K562 (cell line): ENCODE measurements at regions of chrX and their contacts with region 1.

Region 1: GRCh38 chrX:18377796-18378195 is 23.3 kb upstream of the SCML2 start:
- DNase-seq: peak; percentile 22 to 48 (median 27)
- ATAC-seq: peak; percentile 90
- H3K4me3 ChIP-seq: no peak overlapping the region
- H3K27ac ChIP-seq: no peak overlapping the region
- H3K4me1 ChIP-seq: no peaks in the 10 kb centered on the region
- H3K27me3 ChIP-seq: peaks cover 0 to 5% of the 10 kb centered on the region in 2 experiments; a peak in 2 of 5 replicates
- CTCF ChIP-seq: peak; percentile 63 to 71 (median 69)
- EP300 ChIP-seq: no peak
- POLR2A ChIP-seq: no peak
- RAD21 ChIP-seq: peak; percentile 49 to 71; a peak in 3 of 4 replicates

Region 2: DNA sequence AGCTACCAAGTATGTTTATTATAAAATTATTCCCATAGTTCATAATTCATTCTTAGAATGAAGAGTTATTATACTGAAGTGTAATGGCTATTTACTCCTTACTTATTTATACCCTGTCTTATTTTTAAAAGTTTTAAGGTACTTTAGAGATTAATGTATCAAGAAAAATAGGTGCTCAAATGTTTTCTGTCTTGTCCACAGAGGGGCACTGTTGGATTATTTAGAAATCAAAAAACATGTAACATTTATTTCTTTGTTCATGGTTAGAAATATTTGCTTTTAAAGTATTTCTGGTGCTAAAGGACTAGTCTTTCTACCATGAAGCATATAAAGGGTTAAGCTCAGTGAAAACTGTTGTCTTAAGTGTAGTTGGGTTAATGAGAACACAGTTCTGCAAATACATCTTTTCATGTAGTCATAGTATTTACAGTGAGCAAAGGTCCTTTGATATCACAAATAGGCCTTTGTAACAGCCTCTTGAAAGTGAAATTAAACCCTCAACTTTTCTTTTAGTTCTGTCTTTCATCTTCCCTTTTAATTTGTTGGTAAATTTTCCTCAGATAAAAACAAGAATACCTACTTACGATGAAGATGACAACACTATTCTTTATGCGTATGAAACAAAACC is 632.8 kb before region 1 on chrX:
- CTCF ChIA-PET with region 1: interaction called, 4 read pairs
- POLR2A ChIA-PET with region 1: no interaction called
- in situ Hi-C with region 1: no loop called
- intact Hi-C with region 1: loop called (anchors 5 kb)
- DNase-seq: no peak
- ATAC-seq: no peak
- H3K4me3 ChIP-seq: no peak overlapping the region
- H3K27ac ChIP-seq: no peak overlapping the region
- H3K4me1 ChIP-seq: no peaks in the 10 kb centered on the region
- H3K27me3 ChIP-seq: no peaks in the 10 kb centered on the region
- CTCF ChIP-seq: peak in 1 of 3 experiments; percentile 33; a peak in 1 of 6 replicates
- EP300 ChIP-seq: no peak
- POLR2A ChIP-seq: no peak
- RAD21 ChIP-seq: peak in 1 of 2 experiments; percentile 45; a peak in 3 of 4 replicates

Region 3: GRCh38 chrX:17792826-17793225 is 585.0 kb before region 1 on chrX:
- CTCF ChIA-PET with region 1: no interaction called
- POLR2A ChIA-PET with region 1: no interaction called
- in situ Hi-C with region 1: loop called (anchors 10 kb)
- intact Hi-C with region 1: no loop called
- DNase-seq: no peak
- ATAC-seq: no peak
- H3K4me3 ChIP-seq: no peak overlapping the region
- H3K27ac ChIP-seq: no peak overlapping the region
- H3K4me1 ChIP-seq: no peaks in the 10 kb centered on the region
- H3K27me3 ChIP-seq: peaks cover 0 to 6% of the 10 kb centered on the region in 2 experiments; a peak in 1 of 5 replicates
- CTCF ChIP-seq: no peak
- EP300 ChIP-seq: no peak
- POLR2A ChIP-seq: no peak
- RAD21 ChIP-seq: no peak

Region 4: DNA sequence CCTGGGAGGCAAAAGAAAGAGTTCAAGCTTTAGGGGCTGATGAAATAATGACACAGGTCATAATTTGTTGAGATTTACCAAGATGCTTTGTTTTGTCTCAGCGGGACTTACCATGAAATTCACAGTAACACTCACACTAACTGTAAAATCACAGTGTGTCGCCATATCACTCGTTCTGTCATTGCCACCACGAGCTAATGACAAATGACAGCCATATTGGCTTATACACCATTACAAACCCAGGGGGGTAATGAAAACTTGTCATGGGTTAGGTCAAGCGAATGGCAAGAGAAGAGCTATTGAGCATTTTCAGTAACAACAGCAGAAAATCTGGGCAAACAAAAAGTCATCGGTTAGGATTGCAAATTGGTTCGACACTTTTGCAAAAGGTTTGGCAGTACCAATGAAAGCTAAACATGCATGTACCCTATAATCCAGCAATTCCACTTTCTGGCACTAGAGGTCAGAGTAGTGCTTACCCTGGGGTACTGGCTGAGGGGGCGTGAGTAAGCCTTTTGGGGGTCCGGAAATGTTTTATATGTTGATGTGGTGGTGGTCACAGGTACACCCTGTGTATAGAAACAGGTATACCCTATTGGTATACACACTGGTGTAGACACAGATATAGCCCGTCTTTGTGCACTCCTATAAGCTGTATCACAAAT is 432.8 kb before region 1 on chrX:
- CTCF ChIA-PET with region 1: no interaction called
- POLR2A ChIA-PET with region 1: no interaction called
- in situ Hi-C with region 1: loop called (anchors 25 kb)
- intact Hi-C with region 1: loop called (anchors 5 kb)
- DNase-seq: peak; percentile 18 to 40 (median 24)
- ATAC-seq: peak; percentile 72
- H3K4me3 ChIP-seq: no peak overlapping the region
- H3K27ac ChIP-seq: no peak overlapping the region
- H3K4me1 ChIP-seq: no peaks in the 10 kb centered on the region
- H3K27me3 ChIP-seq: no peaks in the 10 kb centered on the region
- CTCF ChIP-seq: peak; percentile 58 to 69 (median 61)
- EP300 ChIP-seq: no peak
- POLR2A ChIP-seq: no peak
- RAD21 ChIP-seq: peak in 1 of 2 experiments; percentile 61; a peak in 2 of 4 replicates

Region 5: GRCh38 chrX:18220786-18221185 is 157.0 kb before region 1 on chrX and contains the start of gene BEND2:
- CTCF ChIA-PET with region 1: no interaction called
- POLR2A ChIA-PET with region 1: no interaction called
- in situ Hi-C with region 1: no loop called
- intact Hi-C with region 1: loop called (anchors 5 kb)
- DNase-seq: no peak
- ATAC-seq: no peak
- H3K4me3 ChIP-seq: no peak within 1 kb of the TSS
- H3K27ac ChIP-seq: no peak within 1 kb of the TSS
- H3K4me1 ChIP-seq: peaks cover 0 to 9% of the 10 kb centered on the region in 2 experiments; a peak in 1 of 5 replicates
- H3K27me3 ChIP-seq: peaks cover 4 to 20% of the 10 kb centered on the region in 2 experiments; a peak in 4 of 5 replicates
- CTCF ChIP-seq: no peak
- EP300 ChIP-seq: no peak
- POLR2A ChIP-seq: no peak
- RAD21 ChIP-seq: no peak
- polyA plus RNA-seq, gene BEND2: 0.07 to 0.18 TPM

Region 6: DNA sequence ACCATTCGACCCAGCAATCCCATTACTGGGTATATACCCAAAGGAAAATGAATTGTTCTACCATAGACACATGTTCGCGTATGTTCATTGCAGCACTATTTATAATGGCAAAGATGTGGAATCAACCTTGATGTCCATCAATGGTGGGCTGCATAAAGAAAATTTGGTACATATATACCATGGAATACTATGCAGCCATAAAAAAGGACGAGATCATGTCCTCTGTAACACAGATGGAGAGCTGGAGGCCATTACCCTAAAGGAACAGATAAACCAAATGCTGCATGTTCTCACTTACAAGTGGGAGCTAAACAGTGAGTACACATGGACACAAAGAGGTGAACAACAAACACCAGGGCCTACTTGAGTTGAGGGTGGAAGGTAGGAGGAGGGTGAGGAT is 68.4 kb before region 1 on chrX:
- CTCF ChIA-PET with region 1: no interaction called
- POLR2A ChIA-PET with region 1: no interaction called
- in situ Hi-C with region 1: no loop called
- intact Hi-C with region 1: no loop called
- DNase-seq: no peak
- ATAC-seq: no peak
- H3K4me3 ChIP-seq: no peak overlapping the region
- H3K27ac ChIP-seq: no peak overlapping the region
- H3K4me1 ChIP-seq: no peaks in the 10 kb centered on the region
- H3K27me3 ChIP-seq: no peaks in the 10 kb centered on the region
- CTCF ChIP-seq: no peak
- EP300 ChIP-seq: no peak
- POLR2A ChIP-seq: no peak
- RAD21 ChIP-seq: no peak